Pancreas (tissue), 10 donors: ENCODE measurements at regions of chr13 and their contacts with region 1.

Region 1: GRCh38 chr13:77751513-77752456 is 54.3 kb downstream of the SLAIN1 start:
- DNase-seq: peak in 3 of 6 donors; percentile 12 to 48 (median 20)
- ATAC-seq: peak; percentile 81 to 98 (median 95)
- H3K4me3 ChIP-seq: no peak overlapping the region
- H3K27ac ChIP-seq: no peak overlapping the region
- H3K4me1 ChIP-seq: peaks cover 0 to 7% (median 5%) of the 10 kb centered on the region in 3 donors
- H3K27me3 ChIP-seq: no peaks in the 10 kb centered on the region
- CTCF ChIP-seq: peak; percentile 36 to 65 (median 54)

Region 2: GRCh38 chr13:77599351-77599750 is 152.4 kb before region 1 on chr13:
- intact Hi-C with region 1: loop called in 2 of 3 experiments (anchors 5 to 10 kb)
- DNase-seq: no peak
- ATAC-seq: peak in 1 of 4 donors; percentile 34
- H3K4me3 ChIP-seq: no peak overlapping the region
- H3K27ac ChIP-seq: no peak overlapping the region
- H3K4me1 ChIP-seq: no peaks in the 10 kb centered on the region
- H3K27me3 ChIP-seq: no peaks in the 10 kb centered on the region
- CTCF ChIP-seq: no peak